Dorsolateral prefrontal cortex (tissue), 120 donors: ENCODE measurements at regions of chr19 and their contacts with region 1.

Region 1: GRCh38 chr19:44356383-44357111 is at the start of gene ZNF112:
- DNase-seq: peak; percentile 82 to 95 (median 92)
- H3K4me3 ChIP-seq: peak within 1 kb of the TSS; percentile 57 to 87 (median 75)
- H3K27ac ChIP-seq: peak within 1 kb of the TSS in 50 of 59 donors; percentile 14 to 86 (median 70)
- H3K27me3 ChIP-seq: peaks cover 0 to 4% (median 0%) of the 10 kb centered on the region in 45 donors
- CTCF ChIP-seq: peak in 26 of 56 donors; percentile 4 to 43 (median 20)
- total RNA-seq, gene ZNF112: 8.1 to 22.7 (median 12.7) TPM

Region 2: GRCh38 chr19:44212250-44212865 is 144.2 kb before region 1 on chr19 and contains the start of gene ZNF227:
- intact Hi-C with region 1: loop called in 1 of 2 experiments (anchors 2 kb)
- DNase-seq: peak; percentile 78 to 94 (median 92)
- H3K4me3 ChIP-seq: peak within 1 kb of the TSS; percentile 68 to 100 (median 90)
- H3K27ac ChIP-seq: peak within 1 kb of the TSS; percentile 11 to 96 (median 87)
- H3K27me3 ChIP-seq: no peaks in the 10 kb centered on the region
- CTCF ChIP-seq: peak in 15 of 56 donors; percentile 6 to 41 (median 21)
- total RNA-seq, gene ZNF227: 23.1 to 58.1 (median 37.4) TPM

Region 3: GRCh38 chr19:44304659-44305193 is 51.8 kb before region 1 on chr19 and contains the start of gene ZNF235:
- intact Hi-C with region 1: loop called (anchors 2 kb)
- DNase-seq: peak; percentile 77 to 95 (median 92)
- H3K4me3 ChIP-seq: peak within 1 kb of the TSS; percentile 63 to 99 (median 89)
- H3K27ac ChIP-seq: peak within 1 kb of the TSS in 48 of 59 donors; percentile 2 to 89 (median 60)
- H3K27me3 ChIP-seq: no peaks in the 10 kb centered on the region
- CTCF ChIP-seq: peak in 17 of 56 donors; percentile 10 to 43 (median 25)
- total RNA-seq, gene ZNF235: 8.6 to 20.5 (median 14.1) TPM

Region 4: DNA sequence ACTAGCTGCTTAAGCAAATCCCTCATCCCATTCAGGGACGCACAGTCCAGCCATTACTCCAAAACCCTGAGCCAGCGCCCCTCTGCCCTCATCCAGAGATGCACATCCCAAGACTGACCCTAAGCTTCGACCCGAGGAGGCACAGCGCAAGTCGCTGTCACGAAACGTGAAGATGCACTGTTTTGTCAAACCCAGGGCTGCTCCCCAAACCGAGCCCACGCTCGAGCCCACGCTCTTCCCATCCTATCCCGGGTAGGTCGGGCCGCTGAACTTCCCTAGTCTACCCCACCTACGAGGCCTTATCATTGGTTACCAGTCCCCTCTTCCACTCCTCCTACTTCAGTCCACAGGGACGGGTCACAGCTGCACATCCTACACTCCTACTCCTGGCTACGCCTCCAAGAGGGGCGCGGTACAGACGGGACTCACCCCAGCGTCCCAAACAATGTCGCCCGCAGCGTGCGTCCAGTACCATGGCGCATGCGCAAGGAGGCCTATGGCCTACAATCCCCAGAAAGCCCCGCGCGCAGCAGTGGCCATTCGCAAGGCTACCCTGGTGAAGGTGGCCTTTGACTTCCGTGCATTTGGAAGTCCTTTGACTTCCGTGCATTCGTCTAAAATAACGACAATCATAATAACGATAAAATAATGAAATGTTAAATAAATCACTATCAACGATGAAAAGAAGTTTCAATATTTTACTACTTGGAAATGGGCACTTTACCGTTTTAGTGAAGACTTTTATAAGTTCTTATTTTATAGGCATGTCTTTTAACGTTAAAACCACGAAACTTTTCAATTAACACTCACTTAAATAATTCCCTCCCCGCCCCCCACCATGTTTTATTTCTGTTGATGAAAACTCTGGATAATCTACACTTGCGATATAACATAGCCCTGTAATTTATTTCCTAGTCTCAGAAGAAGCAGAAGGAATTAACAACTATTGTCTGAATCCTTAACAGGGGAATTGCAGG is 44.9 kb after region 1 on chr19 and contains the start of gene ZNF285:
- intact Hi-C with region 1: loop called (anchors 2 to 5 kb)
- DNase-seq: peak; percentile 83 to 94 (median 90)
- H3K4me3 ChIP-seq: peak within 1 kb of the TSS; percentile 51 to 87 (median 71)
- H3K27ac ChIP-seq: peak within 1 kb of the TSS in 19 of 59 donors; percentile 0 to 62 (median 44)
- H3K27me3 ChIP-seq: no peaks in the 10 kb centered on the region
- CTCF ChIP-seq: peak in 19 of 56 donors; percentile 6 to 49 (median 24)
- total RNA-seq, gene ZNF285: 6.4 to 17.3 (median 11.3) TPM